Gastrocnemius medialis (tissue), 4 donors: ENCODE measurements at regions of chr18 and their contacts with region 1.

Region 1: GRCh38 chr18:3525870-3526420 is 76.0 kb downstream of the TGIF1 start:
- DNase-seq: peak in 1 of 2 donors; percentile 24
- ATAC-seq: peak; percentile 63 to 70
- H3K4me3 ChIP-seq: peak overlapping the region in 1 of 4 donors; percentile 22
- H3K27ac ChIP-seq: peak overlapping the region; percentile 66 to 75 (median 73)
- H3K4me1 ChIP-seq: peaks cover 13% of the 10 kb centered on the region in 2 donors
- H3K27me3 ChIP-seq: no peaks in the 10 kb centered on the region
- CTCF ChIP-seq: no peak
- POLR2A ChIP-seq: no peak

Region 2: DNA sequence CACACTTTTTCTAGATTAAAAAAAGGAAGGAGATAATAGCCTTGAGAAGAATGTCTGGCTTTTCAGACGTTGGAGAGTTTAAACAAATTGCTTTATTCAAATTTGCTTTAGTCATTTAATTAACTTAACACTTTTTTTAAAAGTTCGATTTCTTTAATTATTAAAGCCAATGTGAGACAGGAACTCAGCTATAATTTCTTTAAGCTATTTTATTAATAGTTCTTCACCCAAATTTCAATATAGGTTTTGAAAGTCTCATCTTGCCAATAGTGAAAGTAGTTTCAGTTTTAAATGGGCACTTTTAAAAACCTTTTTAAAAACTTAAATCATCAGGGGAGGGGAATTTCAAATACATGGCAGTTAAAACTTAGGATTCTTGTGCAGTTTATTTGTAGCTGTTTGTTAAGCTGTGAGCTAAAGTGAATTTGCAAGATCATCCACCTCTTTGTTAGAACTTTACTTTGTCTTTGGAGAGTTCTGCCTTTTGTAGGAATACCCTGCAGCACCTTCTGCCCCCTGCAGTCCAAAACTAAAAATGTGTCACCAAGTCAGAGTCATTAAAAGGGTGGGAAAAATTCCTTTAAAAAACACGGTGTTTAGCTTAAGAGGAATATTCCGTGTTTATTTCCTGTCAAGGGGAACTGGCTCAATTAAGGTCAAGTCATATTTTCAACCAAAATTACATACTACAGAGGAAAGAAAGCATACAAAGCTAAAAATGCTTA is 71.4 kb before region 1 on chr18:
- in situ Hi-C with region 1: no loop called
- intact Hi-C with region 1: loop called (anchors 1 kb)
- DNase-seq: peak in 1 of 2 donors; percentile 30
- ATAC-seq: no peak
- H3K4me3 ChIP-seq: peak overlapping the region; percentile 71 to 97 (median 82)
- H3K27ac ChIP-seq: peak overlapping the region; percentile 98 to 99 (median 99)
- H3K4me1 ChIP-seq: peaks cover 34 to 39% of the 10 kb centered on the region in 2 donors
- H3K27me3 ChIP-seq: no peaks in the 10 kb centered on the region
- CTCF ChIP-seq: peak; percentile 52 to 79 (median 65)
- POLR2A ChIP-seq: no peak

Region 3: GRCh38 chr18:3485153-3486149 is 40.5 kb before region 1 on chr18:
- in situ Hi-C with region 1: no loop called
- intact Hi-C with region 1: loop called (anchors 1 kb)
- DNase-seq: no peak
- ATAC-seq: no peak
- H3K4me3 ChIP-seq: no peak overlapping the region
- H3K27ac ChIP-seq: no peak overlapping the region
- H3K4me1 ChIP-seq: no peaks in the 10 kb centered on the region
- H3K27me3 ChIP-seq: no peaks in the 10 kb centered on the region
- CTCF ChIP-seq: no peak
- POLR2A ChIP-seq: no peak

Region 4: GRCh38 chr18:3498698-3499471 is 27.1 kb before region 1 on chr18:
- in situ Hi-C with region 1: no loop called
- intact Hi-C with region 1: no loop called
- DNase-seq: no peak
- ATAC-seq: no peak
- H3K4me3 ChIP-seq: peak overlapping the region; percentile 38 to 57 (median 45)
- H3K27ac ChIP-seq: no peak overlapping the region
- H3K4me1 ChIP-seq: no peaks in the 10 kb centered on the region
- H3K27me3 ChIP-seq: peaks cover 0 to 16% (median 8%) of the 10 kb centered on the region in 3 donors
- CTCF ChIP-seq: no peak
- POLR2A ChIP-seq: no peak

Region 5: GRCh38 chr18:3604498-3605408 is 78.8 kb after region 1 on chr18:
- in situ Hi-C with region 1: no loop called
- intact Hi-C with region 1: no loop called
- DNase-seq: no peak
- ATAC-seq: peak; percentile 53 to 67
- H3K4me3 ChIP-seq: peak overlapping the region; percentile 19 to 57 (median 47)
- H3K27ac ChIP-seq: peak overlapping the region; percentile 64 to 86 (median 82)
- H3K4me1 ChIP-seq: peaks cover 21 to 39% of the 10 kb centered on the region in 2 donors
- H3K27me3 ChIP-seq: peaks cover 0 to 31% (median 21%) of the 10 kb centered on the region in 3 donors
- CTCF ChIP-seq: no peak
- POLR2A ChIP-seq: peak; percentile 8 to 18